ENCODE measurements at regions of chr10 and their contacts with region 1.

Region 1: GRCh38 chr10:56360967-56361612 is at the start of gene ZWINT:
- DNase-seq: peak; percentile 94 to 99 (median 97)
- ATAC-seq: peak; percentile 99
- H3K4me3 ChIP-seq: peak within 1 kb of the TSS; percentile 65
- H3K27ac ChIP-seq: peak within 1 kb of the TSS; percentile 81
- H3K4me1 ChIP-seq: peaks cover 6 to 8% of the 10 kb centered on the region in 2 experiments; a peak in 2 of 5 replicates
- H3K27me3 ChIP-seq: no peaks in the 10 kb centered on the region
- CTCF ChIP-seq: no peak
- EP300 ChIP-seq: no peak; the same call in 1 of the 2 replicates
- POLR2A ChIP-seq: peak; percentile 96
- RAD21 ChIP-seq: no peak
- polyA plus RNA-seq, gene ZWINT: 135 to 245 TPM

Region 2: DNA sequence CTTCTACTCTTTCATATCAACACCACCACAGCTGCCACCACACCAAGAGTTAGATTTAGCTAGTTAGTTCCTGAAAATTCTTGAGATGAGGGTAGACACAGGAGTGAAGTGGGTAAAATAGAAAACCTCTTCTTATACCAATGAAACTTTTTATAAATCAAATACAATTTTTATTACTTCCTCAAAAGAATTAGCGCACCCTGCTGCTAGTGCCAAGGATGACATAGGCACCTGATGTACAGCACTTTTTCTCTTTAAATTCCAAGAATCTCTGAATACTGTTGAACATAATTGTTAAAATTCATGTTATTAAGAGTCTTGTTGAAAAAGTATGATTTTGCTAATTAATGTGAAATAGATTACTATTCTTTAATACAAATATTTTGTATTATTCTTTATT is 11.5 kb before region 1 on chr10:
- CTCF ChIA-PET with region 1: no interaction called
- POLR2A ChIA-PET with region 1: interaction called, 21 read pairs
- in situ Hi-C with region 1: no loop called
- intact Hi-C with region 1: no loop called
- DNase-seq: no peak
- ATAC-seq: no peak
- H3K4me3 ChIP-seq: no peak overlapping the region
- H3K27ac ChIP-seq: no peak overlapping the region
- H3K4me1 ChIP-seq: no peaks in the 10 kb centered on the region
- H3K27me3 ChIP-seq: no peaks in the 10 kb centered on the region
- CTCF ChIP-seq: no peak
- EP300 ChIP-seq: no peak
- POLR2A ChIP-seq: no peak
- RAD21 ChIP-seq: no peak

Region 3: DNA sequence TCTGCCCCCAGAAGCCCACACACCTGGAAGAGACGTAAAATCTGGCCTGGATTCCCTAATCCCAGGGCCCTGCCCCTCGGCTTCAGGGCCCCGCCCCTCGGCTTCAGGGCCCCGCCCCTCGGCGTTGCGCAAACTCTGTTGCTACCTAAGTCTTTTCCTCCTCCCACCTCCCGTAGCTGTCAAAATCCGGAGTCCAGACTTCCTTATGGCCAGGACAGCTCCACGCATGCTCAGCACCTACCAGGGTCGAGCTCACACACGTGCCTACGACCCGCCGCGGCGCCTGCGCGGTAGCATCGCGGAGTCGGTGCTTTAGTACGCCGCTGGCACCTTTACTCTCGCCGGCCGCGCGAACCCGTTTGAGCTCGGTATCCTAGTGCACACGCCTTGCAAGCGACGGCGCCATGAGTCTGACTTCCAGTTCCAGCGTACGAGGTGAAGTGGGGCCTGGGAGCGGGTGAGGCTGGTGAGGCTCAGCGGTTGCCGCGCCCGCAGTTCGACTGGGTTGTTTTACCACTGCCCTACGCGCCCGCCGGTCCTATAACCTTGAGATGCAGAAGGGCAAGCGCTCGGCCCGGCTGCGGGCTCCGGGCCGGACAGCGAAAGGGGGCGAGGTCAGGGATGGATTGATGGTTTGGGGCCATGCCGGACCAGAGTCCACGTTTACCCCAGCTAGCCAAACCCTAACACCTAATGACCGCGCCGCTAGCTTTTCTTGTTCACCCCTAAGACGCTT is 1907.9 kb after region 1 on chr10 and contains the start of gene CISD1:
- CTCF ChIA-PET with region 1: no interaction called
- POLR2A ChIA-PET with region 1: no interaction called
- in situ Hi-C with region 1: no loop called
- intact Hi-C with region 1: loop called (anchors 5 kb)
- DNase-seq: peak; percentile 98 to 99 (median 99)
- ATAC-seq: peak; percentile 81
- H3K4me3 ChIP-seq: peak within 1 kb of the TSS; percentile 71
- H3K27ac ChIP-seq: peak within 1 kb of the TSS; percentile 86
- H3K4me1 ChIP-seq: peaks cover 3 to 21% of the 10 kb centered on the region in 2 experiments; a peak in 3 of 5 replicates
- H3K27me3 ChIP-seq: no peaks in the 10 kb centered on the region
- CTCF ChIP-seq: no peak
- EP300 ChIP-seq: no peak; the same call in 1 of the 2 replicates
- POLR2A ChIP-seq: peak; percentile 95
- RAD21 ChIP-seq: no peak; a peak in 1 of 4 replicates
- polyA plus RNA-seq, gene CISD1: 308 to 342 TPM

Measured in K562 (cell line).